Natural killer cell (primary cell): ENCODE measurements at regions of chr16 and their contacts with region 1.

Region 1: GRCh38 chr16:3094289-3095027 is 4.6 kb downstream of the ZSCAN10 start:
- DNase-seq: peak in 1 of 2 donors; percentile 84
- ATAC-seq: peak; percentile 44 to 62 (median 44)
- H3K4me3 ChIP-seq: no peak overlapping the region
- H3K4me3 Mint-ChIP-seq: peak overlapping the region; percentile 21
- H3K27ac ChIP-seq: no peak overlapping the region
- H3K27ac Mint-ChIP-seq: peak overlapping the region; percentile 53 to 63
- H3K4me1 ChIP-seq: peaks cover 24% of the 10 kb centered on the region
- H3K4me1 Mint-ChIP-seq: peaks cover 11 to 24% of the 10 kb centered on the region in 2 donors
- H3K27me3 ChIP-seq: no peaks in the 10 kb centered on the region
- H3K27me3 Mint-ChIP-seq: no peaks in the 10 kb centered on the region
- CTCF ChIP-seq: peak; percentile 63

Region 2: GRCh38 chr16:3129137-3130131 is 35.0 kb after region 1 on chr16:
- intact Hi-C with region 1: loop called (anchors 1 kb)
- DNase-seq: peak; percentile 59 to 95
- ATAC-seq: peak; percentile 75 to 88 (median 76)
- H3K4me3 ChIP-seq: peak overlapping the region; percentile 54
- H3K4me3 Mint-ChIP-seq: peak overlapping the region; percentile 96
- H3K27ac ChIP-seq: peak overlapping the region; percentile 44
- H3K27ac Mint-ChIP-seq: peak overlapping the region; percentile 85 to 91
- H3K4me1 ChIP-seq: peaks cover 44% of the 10 kb centered on the region
- H3K4me1 Mint-ChIP-seq: peaks cover 38 to 61% of the 10 kb centered on the region in 2 donors
- H3K27me3 ChIP-seq: no peaks in the 10 kb centered on the region
- H3K27me3 Mint-ChIP-seq: no peaks in the 10 kb centered on the region
- CTCF ChIP-seq: peak; percentile 97

Region 3: GRCh38 chr16:3166510-3166895 is 72.0 kb after region 1 on chr16:
- intact Hi-C with region 1: loop called (anchors 2 kb)
- DNase-seq: no peak
- ATAC-seq: no peak
- H3K4me3 ChIP-seq: no peak overlapping the region
- H3K4me3 Mint-ChIP-seq: no peak overlapping the region
- H3K27ac ChIP-seq: no peak overlapping the region
- H3K27ac Mint-ChIP-seq: no peak overlapping the region
- H3K4me1 ChIP-seq: peaks cover 22% of the 10 kb centered on the region
- H3K4me1 Mint-ChIP-seq: peaks cover 20 to 29% of the 10 kb centered on the region in 2 donors
- H3K27me3 ChIP-seq: peaks cover 17% of the 10 kb centered on the region
- H3K27me3 Mint-ChIP-seq: peaks cover 6 to 17% of the 10 kb centered on the region in 2 donors
- CTCF ChIP-seq: no peak